ENCODE measurements at regions of chr5 and their contacts with region 1.

Region 1: GRCh38 chr5:163459922-163460766 is at the starts of genes HMMR and NUDCD2:
- DNase-seq: peak; percentile 97
- ATAC-seq: peak; percentile 89
- H3K4me3 Mint-ChIP-seq: peak within 1 kb of the TSS; percentile 96
- H3K27ac Mint-ChIP-seq: peak within 1 kb of the TSS; percentile 100
- H3K4me1 Mint-ChIP-seq: peaks cover 44% of the 10 kb centered on the region
- H3K27me3 Mint-ChIP-seq: no peaks in the 10 kb centered on the region
- total RNA-seq, gene HMMR: 85.8 to 87.7 TPM
- total RNA-seq, gene NUDCD2: 37.3 to 43.4 TPM

Region 2: DNA sequence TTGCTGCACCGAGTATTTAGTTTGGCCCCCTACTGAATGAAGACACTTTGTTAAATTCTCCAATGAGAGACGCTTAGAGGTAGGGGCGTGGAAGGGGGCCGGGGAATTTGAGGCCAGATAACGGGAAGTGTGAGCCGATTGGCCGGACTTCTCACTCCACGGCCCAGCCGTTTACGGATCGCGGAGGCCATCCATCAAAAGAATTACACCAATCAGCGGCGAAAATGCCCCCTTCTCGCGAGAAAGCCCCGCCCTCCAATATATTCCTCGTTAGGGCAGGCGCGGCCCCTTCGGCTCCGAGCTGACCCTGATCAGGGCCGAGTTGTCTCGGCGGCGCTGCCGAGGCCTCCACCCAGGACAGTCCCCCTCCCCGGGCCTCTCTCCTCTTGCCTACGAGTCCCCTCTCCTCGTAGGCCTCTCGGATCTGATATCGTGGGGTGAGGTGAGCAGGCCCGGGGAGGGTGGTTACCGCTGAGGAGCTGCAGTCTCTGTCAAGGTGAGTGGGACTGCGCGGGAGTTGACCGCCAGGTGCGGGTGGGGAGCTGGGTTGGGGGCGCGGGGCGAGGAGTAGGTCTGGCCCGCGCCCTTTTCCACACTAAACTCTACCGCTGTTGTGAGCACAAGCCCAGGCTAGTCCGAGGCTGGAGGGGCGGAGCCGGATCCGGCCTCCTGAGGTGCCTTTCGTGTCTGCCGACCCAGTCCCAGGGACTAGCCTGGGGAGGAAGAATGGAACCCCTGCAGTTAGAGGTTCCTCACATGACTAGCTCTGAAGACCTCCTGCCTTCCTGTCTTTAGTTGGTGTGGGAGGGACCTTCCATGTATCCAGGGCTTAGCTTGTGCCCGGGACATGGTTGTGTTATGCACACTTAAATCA is 22.6 kb before region 1 on chr5 and contains the start of gene CCNG1:
- CTCF ChIA-PET with region 1: interaction called, 17 read pairs
- POLR2A ChIA-PET with region 1: interaction called, 153 read pairs
- DNase-seq: peak; percentile 96
- ATAC-seq: peak; percentile 97
- H3K4me3 Mint-ChIP-seq: peak within 1 kb of the TSS; percentile 89
- H3K27ac Mint-ChIP-seq: peak within 1 kb of the TSS; percentile 88
- H3K4me1 Mint-ChIP-seq: peaks cover 47% of the 10 kb centered on the region
- H3K27me3 Mint-ChIP-seq: peaks cover 8% of the 10 kb centered on the region
- total RNA-seq, gene CCNG1: 129 to 143 TPM

Region 3: GRCh38 chr5:163473635-163474243 is 13.6 kb after region 1 on chr5:
- CTCF ChIA-PET with region 1: interaction called, 16 read pairs
- POLR2A ChIA-PET with region 1: interaction called, 30 read pairs
- DNase-seq: no peak
- ATAC-seq: peak; percentile 42
- H3K4me3 Mint-ChIP-seq: no peak overlapping the region
- H3K27ac Mint-ChIP-seq: no peak overlapping the region
- H3K4me1 Mint-ChIP-seq: peaks cover 2% of the 10 kb centered on the region
- H3K27me3 Mint-ChIP-seq: no peaks in the 10 kb centered on the region

Region 4: GRCh38 chr5:163489055-163489744 is 29.1 kb after region 1 on chr5:
- CTCF ChIA-PET with region 1: interaction called, 4 read pairs
- POLR2A ChIA-PET with region 1: interaction called, 23 read pairs
- DNase-seq: no peak
- ATAC-seq: peak; percentile 60
- H3K4me3 Mint-ChIP-seq: no peak overlapping the region
- H3K27ac Mint-ChIP-seq: peak overlapping the region; percentile 64
- H3K4me1 Mint-ChIP-seq: no peaks in the 10 kb centered on the region
- H3K27me3 Mint-ChIP-seq: no peaks in the 10 kb centered on the region

Region 5: GRCh38 chr5:163498886-163499285 is 38.7 kb after region 1 on chr5:
- CTCF ChIA-PET with region 1: interaction called, 25 read pairs
- POLR2A ChIA-PET with region 1: interaction called, 185 read pairs
- DNase-seq: no peak
- ATAC-seq: no peak
- H3K4me3 Mint-ChIP-seq: no peak overlapping the region
- H3K27ac Mint-ChIP-seq: no peak overlapping the region
- H3K4me1 Mint-ChIP-seq: peaks cover 11% of the 10 kb centered on the region
- H3K27me3 Mint-ChIP-seq: no peaks in the 10 kb centered on the region

Region 6: DNA sequence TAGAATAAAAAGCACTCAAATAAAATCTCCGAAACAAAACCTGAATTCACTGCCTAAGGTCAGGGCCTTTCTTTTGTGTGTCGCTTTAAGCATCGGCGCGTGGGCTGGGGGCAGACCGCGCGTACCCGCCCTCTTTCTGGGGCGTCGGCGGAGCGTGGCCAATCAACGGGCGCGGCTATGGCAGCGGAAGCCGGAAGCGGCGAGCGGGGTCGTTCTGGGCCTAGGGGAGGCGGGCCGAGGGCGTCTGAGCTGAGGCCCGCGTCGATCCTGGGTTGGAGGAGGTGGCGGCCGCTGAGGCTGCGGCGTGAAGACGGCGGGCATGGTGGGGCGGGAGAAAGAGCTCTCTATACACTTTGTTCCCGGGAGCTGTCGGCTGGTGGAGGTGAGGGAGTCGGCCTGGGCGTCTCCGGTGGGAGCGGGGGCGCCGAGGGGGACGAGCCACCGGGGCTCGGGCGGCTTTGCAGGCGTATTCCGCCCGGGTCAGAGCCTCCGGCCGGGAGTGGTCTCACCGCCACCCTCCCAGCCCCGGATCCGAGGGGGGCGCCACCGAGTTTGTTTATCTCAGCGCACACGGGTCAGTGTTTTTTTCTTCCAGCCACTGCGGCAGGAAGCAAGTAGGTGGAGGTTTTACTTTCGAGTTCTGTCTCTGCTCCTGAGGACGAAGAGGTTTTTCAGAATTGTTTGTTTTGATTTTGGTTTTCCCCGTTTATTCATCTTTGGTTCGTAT is 45.4 kb after region 1 on chr5 and contains the start of gene MAT2B:
- CTCF ChIA-PET with region 1: interaction called, 25 read pairs
- POLR2A ChIA-PET with region 1: interaction called, 185 read pairs
- DNase-seq: peak; percentile 96
- ATAC-seq: peak; percentile 93
- H3K4me3 Mint-ChIP-seq: peak within 1 kb of the TSS; percentile 96
- H3K27ac Mint-ChIP-seq: peak within 1 kb of the TSS; percentile 97
- H3K4me1 Mint-ChIP-seq: peaks cover 40% of the 10 kb centered on the region
- H3K27me3 Mint-ChIP-seq: no peaks in the 10 kb centered on the region
- total RNA-seq, gene MAT2B: 69.4 to 74.1 TPM